ENCODE measurements at regions of chr18 and their contacts with region 1.

Region 1: DNA sequence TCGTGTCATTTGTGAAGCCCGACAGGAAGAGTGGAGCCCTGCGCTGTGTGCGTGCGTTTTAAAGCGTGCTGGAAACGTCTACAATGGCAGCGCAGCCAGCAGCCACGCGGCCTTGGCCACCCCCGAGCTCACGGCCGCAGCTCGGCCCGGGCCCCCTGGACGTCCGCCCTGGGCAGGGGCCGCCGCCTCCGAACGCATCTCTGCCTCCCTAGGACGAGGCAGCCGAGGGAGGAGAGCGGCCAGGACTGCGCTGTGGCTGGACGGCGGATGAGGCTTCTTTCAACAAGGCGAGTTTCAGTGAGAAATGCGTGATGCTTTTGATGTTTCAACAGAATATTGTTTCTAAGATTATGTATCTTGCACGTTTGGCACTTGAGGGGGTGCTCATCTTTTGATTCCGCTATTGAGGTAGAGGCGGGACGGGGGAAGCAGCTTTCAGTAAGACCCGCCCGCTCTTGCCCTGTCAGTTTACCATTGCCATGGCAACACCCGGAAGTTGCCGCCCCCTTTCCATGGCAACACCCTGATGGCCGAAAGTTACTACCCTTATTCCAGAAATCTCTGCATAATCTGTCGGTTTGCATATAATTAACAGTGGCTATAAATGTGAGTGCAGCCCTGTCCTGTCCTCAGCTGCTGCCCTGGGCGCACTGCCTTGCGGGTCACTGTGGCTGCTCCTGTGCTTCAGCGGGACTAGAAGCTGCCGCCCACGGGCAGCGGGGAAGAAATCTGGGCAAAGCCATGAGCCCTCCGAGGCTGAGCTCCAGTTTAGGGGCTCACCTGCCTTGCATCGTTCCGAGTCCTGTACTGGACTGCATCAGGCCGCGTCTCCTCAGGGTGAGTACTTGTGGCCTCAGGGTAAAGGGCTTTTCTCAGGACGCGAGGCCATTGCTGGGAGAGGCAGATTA is 38.6 kb downstream of the ADNP2 start:
- DNase-seq: peak; percentile 88 to 94 (median 91)
- ATAC-seq: peak; percentile 88
- H3K4me3 ChIP-seq: no peak overlapping the region
- H3K4me1 ChIP-seq: peaks cover 4% of the 10 kb centered on the region
- CTCF ChIP-seq: no peak

Region 2: GRCh38 chr18:79988451-79989194 is 159.0 kb before region 1 on chr18 and contains the start of gene TXNL4A:
- intact Hi-C with region 1: loop called in 1 of 2 experiments (anchors 5 kb)
- DNase-seq: peak; percentile 91 to 93 (median 91)
- ATAC-seq: peak; percentile 99
- H3K4me3 ChIP-seq: peak within 1 kb of the TSS; percentile 95
- H3K4me1 ChIP-seq: peaks cover 13% of the 10 kb centered on the region
- CTCF ChIP-seq: no peak
- total RNA-seq, gene TXNL4A: 64.1 to 83.4 (median 76.7) TPM

Region 3: DNA sequence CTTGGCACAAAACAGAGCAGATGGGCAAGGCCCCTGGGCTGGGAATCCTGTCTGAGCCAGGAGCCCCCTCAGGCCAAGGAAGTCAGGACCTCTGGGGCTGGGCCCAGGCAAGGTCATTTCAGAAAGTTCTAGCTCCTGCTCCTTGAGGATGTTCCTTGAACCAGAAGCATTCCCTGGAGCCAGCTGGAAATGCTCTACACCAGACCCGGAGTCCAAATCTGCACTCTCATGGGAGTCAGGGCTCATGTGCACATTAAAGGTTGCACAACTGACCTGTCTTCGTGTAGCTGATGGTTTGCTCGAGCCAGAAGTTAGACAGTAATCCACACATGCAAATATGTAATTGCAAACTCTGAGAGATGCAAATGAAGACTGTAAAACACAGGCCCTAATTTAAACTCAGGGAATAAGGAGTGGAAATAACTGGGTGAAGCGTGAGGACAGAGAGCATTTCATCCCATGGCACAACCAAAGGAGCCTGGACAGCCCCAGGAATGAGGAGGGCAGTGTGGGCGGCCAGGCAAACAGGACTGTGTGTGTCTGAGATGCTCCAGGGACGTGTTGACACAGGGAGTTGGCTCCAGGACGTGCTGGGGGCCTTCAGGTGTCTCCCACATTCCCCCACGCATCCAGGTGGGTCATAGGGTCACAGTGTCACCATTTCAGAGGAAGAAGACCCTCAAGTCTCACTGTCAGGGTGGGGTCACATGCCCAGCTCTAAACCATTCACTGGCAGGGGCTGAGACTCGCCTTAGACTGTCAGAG is 81.9 kb after region 1 on chr18:
- intact Hi-C with region 1: no loop called
- DNase-seq: no peak
- ATAC-seq: no peak
- H3K4me3 ChIP-seq: no peak overlapping the region
- H3K4me1 ChIP-seq: no peaks in the 10 kb centered on the region
- CTCF ChIP-seq: no peak